HepG2 (cell line): ENCODE measurements at regions of chr6 and their contacts with region 1.

Region 1: GRCh38 chr6:145963216-145964068 is 716 bp downstream of the SHPRH start:
- DNase-seq: no peak
- ATAC-seq: peak; percentile 80
- H3K4me3 ChIP-seq: peak overlapping the region; percentile 64 to 87 (median 78)
- H3K27ac ChIP-seq: peak overlapping the region; percentile 88
- H3K4me1 ChIP-seq: peaks cover 31% of the 10 kb centered on the region
- H3K27me3 ChIP-seq: no peaks in the 10 kb centered on the region; a peak in 1 of 5 replicates
- CTCF ChIP-seq: 0 out of 2 replicates have a peak, but pooled peaks have one; percentile 3
- EP300 ChIP-seq: no peak
- POLR2A ChIP-seq: peak; percentile 70
- RAD21 ChIP-seq: no peak; the same call in 1 of the 2 replicates

Region 2: GRCh38 chr6:145734486-145735355 is 228.7 kb before region 1 on chr6:
- CTCF ChIA-PET with region 1: no interaction called
- POLR2A ChIA-PET with region 1: interaction called, 13 read pairs
- in situ Hi-C with region 1: no loop called
- intact Hi-C with region 1: no loop called
- DNase-seq: peak; percentile 94
- ATAC-seq: peak; percentile 93
- H3K4me3 ChIP-seq: peak overlapping the region; percentile 70 to 78 (median 75)
- H3K27ac ChIP-seq: peak overlapping the region; percentile 96
- H3K4me1 ChIP-seq: peaks cover 24% of the 10 kb centered on the region
- H3K27me3 ChIP-seq: no peaks in the 10 kb centered on the region
- CTCF ChIP-seq: 0 out of 2 replicates have a peak, but pooled peaks have one; percentile 20
- EP300 ChIP-seq: peak; percentile 42 to 50; a peak in 1 of 4 replicates
- POLR2A ChIP-seq: peak; percentile 79 to 93
- RAD21 ChIP-seq: peak; percentile 61